ENCODE measurements at regions of chr16 and their contacts with region 1.

Region 1: DNA sequence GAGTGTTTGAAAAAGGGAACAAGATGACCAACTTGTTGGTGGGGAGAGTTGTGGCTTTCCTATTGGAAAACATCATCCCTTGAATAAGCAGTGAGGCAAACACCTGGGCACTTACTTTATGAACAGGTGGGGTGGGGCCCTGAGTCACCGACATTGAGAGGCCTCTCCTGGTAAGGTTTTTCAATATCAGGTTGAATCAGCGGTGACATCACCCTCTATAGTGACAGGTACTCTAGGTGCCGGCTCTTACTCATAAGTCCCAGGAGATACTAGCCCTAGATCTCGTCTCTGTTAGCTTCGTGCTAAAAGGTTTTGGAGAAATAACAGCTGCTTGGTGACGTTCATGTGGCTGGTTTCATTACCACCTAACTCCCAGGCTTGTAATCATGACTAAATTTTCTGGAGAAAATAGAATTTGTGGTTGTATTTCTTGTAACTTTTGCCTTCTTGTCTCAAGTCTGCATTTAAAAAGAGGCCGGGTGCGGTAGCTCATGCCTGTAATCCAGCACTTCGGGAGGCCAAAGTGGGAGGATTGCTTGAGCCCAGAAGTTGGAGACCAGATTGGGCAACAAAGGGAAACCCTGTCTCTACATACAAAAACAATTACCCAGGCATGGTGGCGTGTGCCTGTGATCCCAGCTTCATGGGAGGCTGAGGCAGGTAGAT is 19.3 kb downstream of the CDH1 start:
- DNase-seq: peak; percentile 89
- H3K4me3 Mint-ChIP-seq: peak overlapping the region; percentile 58
- H3K27ac Mint-ChIP-seq: peak overlapping the region; percentile 96
- H3K4me1 Mint-ChIP-seq: peaks cover 64% of the 10 kb centered on the region
- H3K27me3 Mint-ChIP-seq: no peaks in the 10 kb centered on the region

Region 2: DNA sequence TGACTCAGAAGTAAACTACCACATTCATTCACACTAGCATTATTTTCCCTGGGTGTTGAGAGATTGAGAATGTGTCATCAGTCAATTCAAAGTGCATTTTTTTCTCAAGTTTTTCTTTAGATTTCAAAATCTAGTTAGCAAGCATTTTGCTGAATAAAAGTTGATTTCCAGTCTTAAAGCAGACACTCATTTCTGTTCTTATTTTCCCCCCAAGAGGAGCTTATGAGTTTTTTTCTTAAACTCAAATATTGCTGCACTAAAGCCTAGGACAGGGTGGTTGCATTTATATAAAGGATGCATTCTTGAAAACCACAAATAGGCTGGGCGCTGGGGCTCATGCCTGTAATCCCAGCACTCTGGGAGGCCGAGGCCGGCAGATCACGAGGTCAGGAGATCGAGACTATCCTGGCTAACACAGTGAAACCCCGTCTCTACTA is 96.0 kb before region 1 on chr16:
- CTCF ChIA-PET with region 1: interaction called, 3 read pairs
- POLR2A ChIA-PET with region 1: no interaction called
- intact Hi-C with region 1: loop called (anchors 2 kb)
- DNase-seq: no peak
- H3K4me3 Mint-ChIP-seq: no peak overlapping the region
- H3K27ac Mint-ChIP-seq: peak overlapping the region; percentile 25
- H3K4me1 Mint-ChIP-seq: peaks cover 10% of the 10 kb centered on the region
- H3K27me3 Mint-ChIP-seq: peaks cover 9% of the 10 kb centered on the region

Region 3: DNA sequence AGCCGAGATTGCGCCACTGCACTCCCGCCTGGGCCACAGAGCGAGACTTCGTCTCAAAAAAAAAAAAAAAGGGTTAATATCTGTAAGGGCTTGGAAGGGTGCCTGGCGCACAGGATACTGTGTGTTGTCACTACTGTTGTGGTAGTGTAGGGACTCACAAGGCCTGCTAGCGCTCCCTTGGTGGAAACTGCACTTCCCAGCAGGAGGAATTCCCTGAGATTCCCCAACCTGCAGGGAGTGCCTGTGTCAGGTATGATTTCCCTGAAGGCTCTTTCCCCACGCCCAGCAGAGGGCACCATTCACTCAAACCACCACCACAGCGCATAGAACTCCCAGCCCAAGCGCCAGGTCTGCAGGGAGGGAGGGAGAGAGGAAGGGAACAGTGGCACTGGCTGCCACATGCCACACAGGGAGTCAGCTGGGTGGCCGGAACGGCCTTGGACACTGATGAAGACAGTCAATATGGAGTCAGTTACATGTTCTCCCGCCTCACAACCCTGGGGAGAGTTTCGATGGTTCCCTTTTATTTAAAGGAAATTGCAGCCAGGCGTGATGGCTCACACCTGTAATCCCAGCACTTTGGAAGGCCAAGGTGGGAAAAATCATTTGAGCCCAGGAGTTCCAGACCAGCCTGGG is 52.0 kb before region 1 on chr16:
- CTCF ChIA-PET with region 1: no interaction called
- POLR2A ChIA-PET with region 1: no interaction called
- intact Hi-C with region 1: loop called (anchors 1 kb)
- DNase-seq: peak; percentile 82
- H3K4me3 Mint-ChIP-seq: no peak overlapping the region
- H3K27ac Mint-ChIP-seq: no peak overlapping the region
- H3K4me1 Mint-ChIP-seq: peaks cover 11% of the 10 kb centered on the region
- H3K27me3 Mint-ChIP-seq: peaks cover 3% of the 10 kb centered on the region

Region 4: DNA sequence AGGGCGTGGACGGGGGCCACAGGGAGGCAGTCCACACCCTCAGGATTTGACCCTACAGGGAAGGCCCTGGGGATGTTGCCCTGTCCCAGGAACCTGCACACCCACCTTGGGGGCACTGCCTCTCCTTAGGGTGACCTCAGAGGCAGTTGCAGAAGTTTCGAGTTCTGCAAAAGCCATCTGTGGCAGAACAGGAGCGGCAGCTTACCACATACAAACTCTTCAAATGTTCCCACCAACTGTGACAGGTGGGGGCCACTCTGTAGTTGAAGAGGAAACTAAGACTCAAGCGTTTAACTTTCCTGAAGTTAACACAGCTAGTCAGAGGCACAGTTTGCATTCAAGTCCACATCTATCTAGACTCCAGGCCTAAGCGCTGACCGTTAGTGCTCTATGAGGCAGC is 25.8 kb after region 1 on chr16:
- CTCF ChIA-PET with region 1: interaction called, 8 read pairs
- POLR2A ChIA-PET with region 1: interaction called, 4 read pairs
- intact Hi-C with region 1: loop called (anchors 1 kb)
- DNase-seq: peak; percentile 23
- H3K4me3 Mint-ChIP-seq: no peak overlapping the region
- H3K27ac Mint-ChIP-seq: no peak overlapping the region
- H3K4me1 Mint-ChIP-seq: peaks cover 8% of the 10 kb centered on the region
- H3K27me3 Mint-ChIP-seq: peaks cover 4% of the 10 kb centered on the region

Region 5: DNA sequence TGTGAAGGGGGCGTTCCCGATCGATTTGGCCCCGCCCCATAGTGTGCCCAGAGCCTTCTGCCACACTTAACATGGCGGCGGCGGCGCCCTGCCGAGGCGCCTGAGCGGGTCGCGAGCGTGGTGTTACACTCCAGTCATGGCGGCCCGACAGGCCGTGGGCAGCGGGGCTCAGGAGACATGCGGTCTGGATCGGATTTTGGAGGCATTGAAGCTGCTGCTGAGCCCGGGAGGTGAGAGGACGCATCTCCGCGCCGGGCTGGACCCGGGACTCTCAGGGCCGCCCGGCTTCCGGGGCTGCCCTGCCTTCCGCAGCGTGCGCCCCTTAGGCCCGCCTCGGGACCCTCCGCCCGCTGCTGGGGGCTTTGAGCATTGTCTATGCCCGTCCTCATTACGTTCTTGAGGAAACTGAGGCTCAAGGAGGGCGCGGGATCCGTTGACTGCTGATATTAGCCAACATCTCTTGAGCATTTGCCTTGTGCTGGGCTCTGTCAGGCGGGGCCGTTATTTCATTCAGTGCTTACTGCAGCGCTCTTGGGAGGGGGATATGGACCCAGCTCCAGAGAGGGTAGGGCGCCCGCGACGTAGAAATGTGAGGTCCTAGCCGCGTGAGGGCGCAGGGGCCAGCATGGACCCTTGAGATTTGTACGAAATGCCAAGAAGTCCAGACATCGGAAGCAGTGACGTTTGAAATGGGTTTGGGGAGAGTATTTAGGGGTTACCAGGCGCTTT is 87.3 kb after region 1 on chr16 and contains the start of gene TANGO6:
- CTCF ChIA-PET with region 1: interaction called, 7 read pairs
- POLR2A ChIA-PET with region 1: interaction called, 4 read pairs
- intact Hi-C with region 1: loop called (anchors 1 kb)
- DNase-seq: peak; percentile 96
- H3K4me3 Mint-ChIP-seq: peak within 1 kb of the TSS; percentile 95
- H3K27ac Mint-ChIP-seq: peak within 1 kb of the TSS; percentile 85
- H3K4me1 Mint-ChIP-seq: peaks cover 25% of the 10 kb centered on the region
- H3K27me3 Mint-ChIP-seq: no peaks in the 10 kb centered on the region
- total RNA-seq, gene TANGO6: 25.2 to 25.7 TPM